MCF 10A (cell line): ENCODE measurements at regions of chr5 and their contacts with region 1.

Region 1: GRCh38 chr5:126490167-126490940 is 67.1 kb downstream of the GRAMD2B start:
- DNase-seq: no peak
- H3K4me3 Mint-ChIP-seq: no peak overlapping the region
- H3K27ac Mint-ChIP-seq: no peak overlapping the region
- H3K4me1 Mint-ChIP-seq: no peaks in the 10 kb centered on the region
- H3K27me3 Mint-ChIP-seq: no peaks in the 10 kb centered on the region
- CTCF ChIP-seq: no peak

Region 2: DNA sequence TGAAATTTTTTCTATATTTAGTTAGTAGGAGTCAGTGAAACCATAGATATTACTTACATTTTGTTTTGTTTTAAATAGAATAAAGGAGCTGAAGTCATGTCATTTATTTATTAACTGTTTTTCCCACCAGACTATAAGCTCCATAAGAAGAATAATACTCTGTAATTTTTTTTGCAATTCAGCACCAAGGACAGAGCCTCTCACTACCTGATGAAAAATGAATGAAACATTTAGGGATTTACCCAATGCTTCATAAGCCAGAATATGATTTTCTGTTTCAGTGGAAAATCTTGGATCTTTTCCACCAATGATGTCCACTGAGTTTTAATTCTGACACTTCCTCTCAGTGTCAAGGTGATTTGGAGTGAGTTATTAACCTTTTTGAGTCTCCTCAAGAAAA is 692.0 kb before region 1 on chr5:
- CTCF ChIA-PET with region 1: no interaction called
- POLR2A ChIA-PET with region 1: no interaction called
- intact Hi-C with region 1: no loop called
- DNase-seq: peak; percentile 75
- H3K4me3 Mint-ChIP-seq: no peak overlapping the region
- H3K27ac Mint-ChIP-seq: no peak overlapping the region
- H3K4me1 Mint-ChIP-seq: peaks cover 4% of the 10 kb centered on the region
- H3K27me3 Mint-ChIP-seq: no peaks in the 10 kb centered on the region
- CTCF ChIP-seq: no peak

Region 3: GRCh38 chr5:126544087-126544740 is 53.9 kb after region 1 on chr5:
- CTCF ChIA-PET with region 1: interaction called, 7 read pairs
- POLR2A ChIA-PET with region 1: no interaction called
- intact Hi-C with region 1: loop called (anchors 1 kb)
- DNase-seq: peak; percentile 60
- H3K4me3 Mint-ChIP-seq: no peak overlapping the region
- H3K27ac Mint-ChIP-seq: peak overlapping the region; percentile 33
- H3K4me1 Mint-ChIP-seq: no peaks in the 10 kb centered on the region
- H3K27me3 Mint-ChIP-seq: no peaks in the 10 kb centered on the region
- CTCF ChIP-seq: peak; percentile 63